ENCODE measurements at regions of chr17 and their contacts with region 1.

Region 1: GRCh38 chr17:35537601-35538141 is at the start of gene SLFN12L:
- DNase-seq: peak; percentile 54
- H3K4me3 Mint-ChIP-seq: peak within 1 kb of the TSS; percentile 92
- H3K27ac Mint-ChIP-seq: peak within 1 kb of the TSS; percentile 98
- H3K4me1 Mint-ChIP-seq: peaks cover 47% of the 10 kb centered on the region
- H3K27me3 Mint-ChIP-seq: no peaks in the 10 kb centered on the region
- total RNA-seq, gene SLFN12L: 23.5 to 25.2 TPM

Region 2: GRCh38 chr17:35063514-35064223 is 474.0 kb before region 1 on chr17 and contains the start of gene RFFL:
- CTCF ChIA-PET with region 1: no interaction called
- intact Hi-C with region 1: loop called (anchors 1 kb)
- DNase-seq: peak; percentile 97
- H3K4me3 Mint-ChIP-seq: peak within 1 kb of the TSS; percentile 23
- H3K27ac Mint-ChIP-seq: peak within 1 kb of the TSS; percentile 65
- H3K4me1 Mint-ChIP-seq: peaks cover 57% of the 10 kb centered on the region
- H3K27me3 Mint-ChIP-seq: no peaks in the 10 kb centered on the region
- total RNA-seq, gene RFFL: 17.8 to 18.2 TPM

Region 3: GRCh38 chr17:35170968-35171771 is 366.5 kb before region 1 on chr17:
- CTCF ChIA-PET with region 1: interaction called, 5 read pairs
- intact Hi-C with region 1: loop called (anchors 1 kb)
- DNase-seq: no peak
- H3K4me3 Mint-ChIP-seq: no peak overlapping the region
- H3K27ac Mint-ChIP-seq: peak overlapping the region; percentile 61
- H3K4me1 Mint-ChIP-seq: peaks cover 33% of the 10 kb centered on the region
- H3K27me3 Mint-ChIP-seq: no peaks in the 10 kb centered on the region

Region 4: DNA sequence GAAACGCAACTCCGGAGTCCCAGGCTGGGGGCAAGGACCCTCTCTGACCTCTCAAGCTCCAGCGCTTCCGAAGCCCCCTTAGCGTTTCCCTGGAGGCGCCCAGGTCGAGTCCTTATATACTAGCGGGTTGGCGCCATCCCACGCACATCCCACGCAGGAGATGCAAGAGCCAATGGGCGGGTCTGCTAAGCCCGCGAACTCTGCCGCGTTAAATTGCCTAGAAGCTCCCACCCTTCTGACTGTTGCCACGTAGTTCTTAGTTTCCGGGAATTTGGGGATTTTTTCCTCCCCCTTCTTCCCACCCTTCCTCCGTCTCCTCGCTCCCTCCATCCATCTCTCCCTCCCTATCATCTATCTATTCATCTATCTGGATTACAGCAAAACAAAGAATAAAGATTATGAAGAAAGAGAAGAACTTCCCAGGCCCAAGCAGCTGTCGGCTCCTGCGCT is 164.1 kb before region 1 on chr17 and contains the start of gene SLFN11:
- CTCF ChIA-PET with region 1: interaction called, 11 read pairs
- intact Hi-C with region 1: loop called (anchors 1 kb)
- DNase-seq: peak; percentile 93
- H3K4me3 Mint-ChIP-seq: peak within 1 kb of the TSS; percentile 96
- H3K27ac Mint-ChIP-seq: peak within 1 kb of the TSS; percentile 99
- H3K4me1 Mint-ChIP-seq: peaks cover 52% of the 10 kb centered on the region
- H3K27me3 Mint-ChIP-seq: no peaks in the 10 kb centered on the region
- total RNA-seq, gene SLFN11: 46.4 to 49.6 TPM

Region 5: GRCh38 chr17:35486920-35487732 is 50.5 kb before region 1 on chr17:
- CTCF ChIA-PET with region 1: interaction called, 12 read pairs
- intact Hi-C with region 1: loop called (anchors 1 kb)
- DNase-seq: peak; percentile 90
- H3K4me3 Mint-ChIP-seq: peak overlapping the region; percentile 82
- H3K27ac Mint-ChIP-seq: peak overlapping the region; percentile 83
- H3K4me1 Mint-ChIP-seq: peaks cover 27% of the 10 kb centered on the region
- H3K27me3 Mint-ChIP-seq: no peaks in the 10 kb centered on the region

Region 6: DNA sequence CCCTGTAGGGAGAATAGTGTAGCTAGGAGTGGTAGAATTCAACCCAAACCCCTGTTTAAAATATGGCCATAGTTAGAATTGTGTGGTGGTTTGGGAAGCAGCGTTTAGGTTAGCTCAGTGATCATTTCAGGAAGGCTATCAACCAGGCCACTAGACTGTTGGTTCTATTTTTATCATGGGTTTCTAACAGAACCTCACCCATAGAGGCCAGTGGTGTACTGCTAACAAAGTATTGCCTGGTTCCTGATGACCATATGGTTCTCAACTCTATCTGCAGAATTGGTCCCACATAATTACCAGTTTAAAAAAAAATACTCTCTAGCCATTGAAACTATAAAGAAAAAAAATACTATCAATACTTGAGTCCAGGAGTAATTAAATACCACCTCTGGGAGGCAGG is 123.2 kb after region 1 on chr17:
- CTCF ChIA-PET with region 1: no interaction called
- intact Hi-C with region 1: no loop called
- DNase-seq: no peak
- H3K4me3 Mint-ChIP-seq: no peak overlapping the region
- H3K27ac Mint-ChIP-seq: no peak overlapping the region
- H3K4me1 Mint-ChIP-seq: no peaks in the 10 kb centered on the region
- H3K27me3 Mint-ChIP-seq: no peaks in the 10 kb centered on the region

Region 7: DNA sequence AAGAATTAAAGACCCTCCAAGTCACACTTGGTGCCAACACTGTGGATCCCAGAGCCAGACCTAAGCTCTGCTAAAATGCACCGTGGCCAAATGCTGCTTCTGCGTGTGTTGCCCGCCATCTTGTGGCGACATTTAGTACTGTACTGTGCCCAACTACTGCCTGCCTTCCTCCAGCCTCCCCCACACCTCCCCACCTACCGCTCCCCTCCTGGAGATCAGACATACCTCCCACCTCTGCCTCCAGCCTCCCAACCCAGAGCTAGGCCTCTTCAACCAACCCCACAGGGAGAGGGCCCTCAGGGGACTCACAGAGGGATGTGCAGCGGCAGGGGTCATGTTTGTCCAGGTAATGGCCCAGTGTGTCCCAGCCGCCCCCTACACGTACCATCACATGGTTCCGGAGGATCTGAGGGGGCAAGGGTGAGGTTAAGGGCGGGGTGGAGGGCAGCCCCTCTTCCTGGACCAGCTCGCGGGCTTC is 209.9 kb after region 1 on chr17:
- CTCF ChIA-PET with region 1: interaction called, 10 read pairs
- intact Hi-C with region 1: loop called (anchors 10 kb)
- DNase-seq: peak; percentile 89
- H3K4me3 Mint-ChIP-seq: no peak overlapping the region
- H3K27ac Mint-ChIP-seq: no peak overlapping the region
- H3K4me1 Mint-ChIP-seq: peaks cover 15% of the 10 kb centered on the region
- H3K27me3 Mint-ChIP-seq: peaks cover 42% of the 10 kb centered on the region

Measured in activated naive CD4-positive, alpha-beta T cell treated with anti-CD3 and anti-CD28 coated beads for 36 hours (primary cell).